ENCODE measurements at regions of chr18 and their contacts with region 1.

Region 1: DNA sequence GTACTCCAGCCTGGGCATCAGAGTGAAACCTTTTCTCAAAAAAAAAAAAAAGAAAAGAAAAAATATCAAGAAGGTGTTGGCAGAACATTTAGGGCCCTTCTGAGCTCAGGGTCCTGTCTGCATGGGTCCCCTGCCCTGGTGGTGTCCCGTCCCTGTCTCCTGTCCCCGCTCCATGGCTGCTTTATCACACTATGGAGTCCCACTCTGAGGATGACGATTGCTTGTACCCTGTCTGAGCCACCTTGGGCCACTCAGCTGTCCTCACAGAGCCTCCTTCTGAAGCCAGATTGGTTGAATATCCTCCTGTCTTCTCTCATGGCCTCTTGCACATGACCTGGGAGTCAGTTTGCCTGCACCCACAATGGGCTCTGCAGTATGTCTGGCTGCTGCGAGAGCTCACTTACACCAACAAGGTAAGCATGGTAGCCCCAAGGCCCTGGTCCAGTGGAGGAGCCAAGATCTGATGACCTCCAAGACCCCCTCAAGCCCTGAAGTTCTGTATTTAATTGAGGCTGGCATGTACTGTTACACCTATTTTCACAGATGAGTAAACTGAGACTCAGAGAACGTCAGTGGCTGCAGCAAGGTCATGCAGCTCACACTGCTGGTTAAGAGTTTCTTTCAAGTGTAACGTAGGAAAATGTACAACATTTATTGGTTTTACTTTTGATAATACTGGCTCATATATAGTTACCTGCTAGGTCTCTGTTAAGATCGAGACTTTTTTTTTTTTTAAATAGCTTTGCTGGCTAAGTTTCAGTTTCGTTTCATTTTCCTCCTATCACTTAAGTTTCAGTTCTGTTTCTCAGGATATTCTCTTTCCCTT is 16.9 kb upstream of the ZCCHC2 start:
- DNase-seq: peak; percentile 63
- H3K4me3 Mint-ChIP-seq: peak overlapping the region; percentile 55
- H3K27ac Mint-ChIP-seq: peak overlapping the region; percentile 86
- H3K4me1 Mint-ChIP-seq: peaks cover 20% of the 10 kb centered on the region
- H3K27me3 Mint-ChIP-seq: no peaks in the 10 kb centered on the region

Region 2: DNA sequence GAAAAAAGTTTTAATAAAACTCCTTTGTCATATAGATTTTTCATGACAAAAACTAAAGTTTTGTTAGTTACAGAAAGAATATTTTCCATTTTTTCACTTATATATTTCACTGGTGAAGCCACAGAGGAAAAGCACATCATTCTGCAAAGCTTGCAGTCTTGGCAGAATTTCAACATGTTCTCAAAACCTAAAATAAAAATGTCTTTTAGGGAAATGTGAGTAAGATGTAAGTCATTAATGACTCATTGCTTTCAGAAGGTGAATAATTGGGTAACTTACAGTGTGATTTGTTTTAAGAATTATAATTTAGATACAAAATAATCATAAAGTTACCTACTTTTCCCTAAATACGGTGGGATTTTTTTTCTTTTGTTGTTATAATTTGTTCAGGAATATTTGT is 224.2 kb before region 1 on chr18:
- CTCF ChIA-PET with region 1: no interaction called
- intact Hi-C with region 1: loop called (anchors 1 kb)
- DNase-seq: no peak
- H3K4me3 Mint-ChIP-seq: no peak overlapping the region
- H3K27ac Mint-ChIP-seq: no peak overlapping the region
- H3K4me1 Mint-ChIP-seq: peaks cover 39% of the 10 kb centered on the region
- H3K27me3 Mint-ChIP-seq: no peaks in the 10 kb centered on the region

Region 3: GRCh38 chr18:62288665-62289008 is 217.2 kb before region 1 on chr18:
- CTCF ChIA-PET with region 1: no interaction called
- intact Hi-C with region 1: loop called (anchors 1 kb)
- DNase-seq: no peak
- H3K4me3 Mint-ChIP-seq: no peak overlapping the region
- H3K27ac Mint-ChIP-seq: no peak overlapping the region
- H3K4me1 Mint-ChIP-seq: peaks cover 32% of the 10 kb centered on the region
- H3K27me3 Mint-ChIP-seq: no peaks in the 10 kb centered on the region

Region 4: DNA sequence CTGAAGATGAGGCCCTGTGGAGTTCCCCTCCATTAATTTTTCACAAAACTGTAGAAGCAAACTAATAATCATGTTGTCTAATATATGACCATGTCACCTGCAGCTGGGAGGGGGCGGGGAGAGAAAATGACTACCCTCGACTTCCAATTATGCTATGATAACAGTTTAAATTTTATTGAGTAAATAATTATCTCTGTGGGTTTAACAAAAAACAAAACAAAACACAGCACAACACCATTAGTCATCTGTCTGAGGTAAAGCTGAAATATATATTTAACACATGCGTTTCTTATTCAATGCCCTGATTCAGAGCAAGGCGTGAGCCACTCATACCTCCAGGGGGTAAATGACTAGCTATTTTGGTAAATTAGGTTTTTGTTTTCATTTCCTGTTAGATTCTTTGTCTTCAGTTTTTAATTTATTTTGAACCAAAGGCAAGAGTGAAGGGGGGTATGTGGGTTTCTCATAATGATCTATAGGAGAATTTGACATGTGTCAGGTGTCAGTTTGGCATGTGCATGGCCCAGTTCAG is 60.4 kb before region 1 on chr18:
- CTCF ChIA-PET with region 1: interaction called, 3 read pairs
- intact Hi-C with region 1: loop called (anchors 1 kb)
- DNase-seq: peak; percentile 18
- H3K4me3 Mint-ChIP-seq: no peak overlapping the region
- H3K27ac Mint-ChIP-seq: no peak overlapping the region
- H3K4me1 Mint-ChIP-seq: no peaks in the 10 kb centered on the region
- H3K27me3 Mint-ChIP-seq: no peaks in the 10 kb centered on the region

Region 5: DNA sequence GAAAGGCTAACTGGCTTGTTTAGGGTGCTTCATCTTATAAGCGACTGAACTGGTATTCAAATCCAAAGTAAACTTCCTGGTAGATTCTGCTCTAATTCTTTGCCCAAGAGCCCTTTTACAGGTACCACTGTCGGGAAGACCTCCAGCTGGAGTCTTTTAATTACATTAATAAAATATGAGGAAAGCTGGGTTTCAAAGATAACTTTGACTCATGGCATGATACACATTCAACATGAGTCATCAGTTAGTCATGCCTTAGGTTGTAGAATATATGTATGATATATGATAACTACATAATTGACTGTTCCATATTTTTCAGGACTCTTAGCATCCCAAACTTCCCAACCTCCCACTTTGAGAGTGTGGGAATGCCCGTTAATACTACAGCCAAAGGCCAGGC is 49.3 kb after region 1 on chr18:
- CTCF ChIA-PET with region 1: no interaction called
- intact Hi-C with region 1: loop called (anchors 1 kb)
- DNase-seq: no peak
- H3K4me3 Mint-ChIP-seq: no peak overlapping the region
- H3K27ac Mint-ChIP-seq: no peak overlapping the region
- H3K4me1 Mint-ChIP-seq: peaks cover 24% of the 10 kb centered on the region
- H3K27me3 Mint-ChIP-seq: no peaks in the 10 kb centered on the region

Region 6: DNA sequence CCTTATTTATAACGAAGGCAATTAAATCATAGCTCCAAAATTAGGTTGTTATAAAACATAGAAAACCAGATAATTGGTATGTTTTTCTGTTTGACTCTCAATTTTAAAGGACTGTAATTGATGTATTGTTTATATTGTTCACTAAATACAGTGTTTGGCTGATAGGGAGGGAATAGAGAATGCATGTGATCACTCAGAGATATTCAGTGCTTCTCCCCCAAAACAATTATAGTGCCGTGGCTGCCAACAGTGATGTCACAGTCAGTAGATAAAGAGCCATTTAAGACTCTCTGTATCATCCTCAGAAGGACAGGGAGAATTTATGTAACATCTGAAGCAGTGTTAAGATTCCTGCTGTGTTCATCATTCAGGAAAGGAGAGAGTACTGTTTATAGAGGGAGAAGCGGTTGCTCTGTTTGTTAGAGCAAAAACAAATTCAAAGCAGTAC is 279.1 kb after region 1 on chr18:
- CTCF ChIA-PET with region 1: no interaction called
- intact Hi-C with region 1: loop called (anchors 5 kb)
- DNase-seq: no peak
- H3K4me3 Mint-ChIP-seq: no peak overlapping the region
- H3K27ac Mint-ChIP-seq: no peak overlapping the region
- H3K4me1 Mint-ChIP-seq: peaks cover 37% of the 10 kb centered on the region
- H3K27me3 Mint-ChIP-seq: peaks cover 5% of the 10 kb centered on the region